Ascending aorta (tissue), 2 donors: ENCODE measurements at regions of chr1 and their contacts with region 1.

Region 1: GRCh38 chr1:63674238-63674864 is 81.1 kb downstream of the PGM1 start:
- DNase-seq: peak in 1 of 2 donors; percentile 89
- H3K4me3 ChIP-seq: no peak overlapping the region
- H3K27ac ChIP-seq: peak overlapping the region; percentile 70 to 73
- H3K4me1 ChIP-seq: peaks cover 0 to 14% of the 10 kb centered on the region in 2 donors
- H3K27me3 ChIP-seq: no peaks in the 10 kb centered on the region
- CTCF ChIP-seq: peak; percentile 57 to 79 (median 66)

Region 2: GRCh38 chr1:63593303-63593885 is 81.0 kb before region 1 on chr1 and contains the start of gene PGM1:
- intact Hi-C with region 1: no loop called
- DNase-seq: peak in 1 of 2 donors; percentile 87
- H3K4me3 ChIP-seq: peak within 1 kb of the TSS; percentile 87 to 89
- H3K27ac ChIP-seq: peak within 1 kb of the TSS; percentile 92 to 94
- H3K4me1 ChIP-seq: peaks cover 0 to 23% of the 10 kb centered on the region in 2 donors
- H3K27me3 ChIP-seq: no peaks in the 10 kb centered on the region
- CTCF ChIP-seq: no peak
- total RNA-seq, gene PGM1: 23.7 TPM

Region 3: GRCh38 chr1:63615768-63616420 is 58.5 kb before region 1 on chr1:
- intact Hi-C with region 1: loop called (anchors 5 kb)
- DNase-seq: peak in 1 of 2 donors; percentile 87
- H3K4me3 ChIP-seq: no peak overlapping the region
- H3K27ac ChIP-seq: no peak overlapping the region
- H3K4me1 ChIP-seq: peaks cover 0 to 13% of the 10 kb centered on the region in 2 donors
- H3K27me3 ChIP-seq: no peaks in the 10 kb centered on the region
- CTCF ChIP-seq: peak; percentile 67 to 85 (median 77)

Region 4: DNA sequence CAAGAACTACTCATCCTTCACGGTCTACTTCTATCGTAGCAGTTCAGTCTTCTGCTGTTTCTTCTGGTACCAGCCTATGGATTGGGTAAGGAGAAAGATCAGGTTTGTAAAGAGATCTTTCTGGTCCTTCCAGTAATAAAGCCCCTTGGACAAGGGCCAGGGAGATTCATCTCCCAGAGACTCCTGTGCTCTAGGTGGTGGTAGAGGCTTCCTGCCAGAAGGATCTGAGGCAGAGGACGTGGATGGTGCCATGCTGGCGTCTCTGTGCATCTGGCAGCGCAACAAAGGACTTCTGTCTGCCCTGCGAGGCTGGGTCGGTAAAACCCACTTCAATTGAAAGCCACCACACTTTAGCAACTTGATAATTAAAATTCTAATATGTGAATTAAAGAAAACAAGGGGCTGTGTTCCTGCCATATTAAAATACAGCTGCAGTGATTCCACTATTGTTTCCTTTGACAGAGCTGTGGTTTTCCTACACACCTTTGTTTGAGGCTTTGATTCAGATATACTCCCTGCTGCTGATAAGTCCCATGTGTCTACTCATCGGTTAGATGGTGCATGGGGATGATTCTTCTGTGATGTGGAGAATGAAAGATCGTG is 173.1 kb after region 1 on chr1:
- intact Hi-C with region 1: no loop called
- DNase-seq: no peak
- H3K4me3 ChIP-seq: no peak overlapping the region
- H3K27ac ChIP-seq: peak overlapping the region; percentile 2 to 32
- H3K4me1 ChIP-seq: peaks cover 2 to 34% of the 10 kb centered on the region in 2 donors
- H3K27me3 ChIP-seq: no peaks in the 10 kb centered on the region
- CTCF ChIP-seq: no peak

Region 5: GRCh38 chr1:64163970-64164369 is 489.6 kb after region 1 on chr1:
- intact Hi-C with region 1: loop called (anchors 5 kb)
- DNase-seq: no peak
- H3K4me3 ChIP-seq: no peak overlapping the region
- H3K27ac ChIP-seq: peak overlapping the region; percentile 61 to 70
- H3K4me1 ChIP-seq: peaks cover 12 to 34% of the 10 kb centered on the region in 2 donors
- H3K27me3 ChIP-seq: no peaks in the 10 kb centered on the region
- CTCF ChIP-seq: peak in 2 of 3 experiments; percentile 37 to 58